ENCODE measurements at regions of chr3 and their contacts with region 1.

Region 1: DNA sequence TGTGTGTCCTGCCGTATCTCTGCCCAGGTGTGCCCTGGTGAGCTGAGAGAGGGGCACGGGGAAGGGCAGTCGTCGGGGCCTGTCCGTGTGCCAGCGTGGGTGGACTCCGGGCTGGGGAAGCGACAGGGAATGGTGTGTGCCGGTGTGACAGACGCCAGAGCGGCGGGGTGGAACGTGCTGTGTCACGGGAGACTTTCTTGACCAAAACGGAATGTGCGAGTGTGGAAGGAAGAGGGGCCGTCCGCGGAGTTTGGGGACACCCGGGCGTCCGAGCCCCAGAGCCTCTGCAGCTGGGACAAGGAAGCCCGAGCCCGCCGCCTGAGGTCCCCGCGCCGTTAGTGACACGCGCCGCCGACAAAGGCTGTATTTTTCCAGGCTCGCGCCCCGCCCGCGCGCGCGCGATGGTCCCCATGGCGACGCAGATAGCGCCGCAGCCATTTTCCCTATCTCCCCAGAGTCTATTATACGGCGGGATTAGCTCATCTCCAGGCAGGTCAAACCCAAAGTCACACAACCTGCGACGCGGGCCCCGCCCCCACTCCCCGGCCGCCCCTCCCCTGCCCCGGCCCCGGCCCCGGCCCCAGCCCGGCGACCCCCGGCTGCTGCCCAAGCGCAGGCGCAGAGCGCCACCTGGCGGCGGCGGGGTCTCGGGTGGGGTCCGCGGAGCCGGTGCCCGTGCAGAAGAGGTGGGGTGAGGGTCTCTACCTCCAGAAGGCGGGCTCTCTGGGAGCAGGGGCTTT is 4.6 kb upstream of the GATA2 start:
- H3K4me3 ChIP-seq: peak overlapping the region; percentile 38
- H3K27ac ChIP-seq: no peak overlapping the region; the same call in 1 of the 2 replicates
- H3K4me1 ChIP-seq: no peaks in the 10 kb centered on the region
- CTCF ChIP-seq: no peak

Region 2: GRCh38 chr3:128426128-128426921 is 71.2 kb before region 1 on chr3:
- CTCF ChIA-PET with region 1: interaction called, 19 read pairs
- POLR2A ChIA-PET with region 1: interaction called, 4 read pairs
- H3K4me3 ChIP-seq: no peak overlapping the region
- H3K27ac ChIP-seq: no peak overlapping the region
- H3K4me1 ChIP-seq: no peaks in the 10 kb centered on the region
- CTCF ChIP-seq: no peak